BJ (cell line): ENCODE measurements at regions of chr17 and their contacts with region 1.

Region 1: DNA sequence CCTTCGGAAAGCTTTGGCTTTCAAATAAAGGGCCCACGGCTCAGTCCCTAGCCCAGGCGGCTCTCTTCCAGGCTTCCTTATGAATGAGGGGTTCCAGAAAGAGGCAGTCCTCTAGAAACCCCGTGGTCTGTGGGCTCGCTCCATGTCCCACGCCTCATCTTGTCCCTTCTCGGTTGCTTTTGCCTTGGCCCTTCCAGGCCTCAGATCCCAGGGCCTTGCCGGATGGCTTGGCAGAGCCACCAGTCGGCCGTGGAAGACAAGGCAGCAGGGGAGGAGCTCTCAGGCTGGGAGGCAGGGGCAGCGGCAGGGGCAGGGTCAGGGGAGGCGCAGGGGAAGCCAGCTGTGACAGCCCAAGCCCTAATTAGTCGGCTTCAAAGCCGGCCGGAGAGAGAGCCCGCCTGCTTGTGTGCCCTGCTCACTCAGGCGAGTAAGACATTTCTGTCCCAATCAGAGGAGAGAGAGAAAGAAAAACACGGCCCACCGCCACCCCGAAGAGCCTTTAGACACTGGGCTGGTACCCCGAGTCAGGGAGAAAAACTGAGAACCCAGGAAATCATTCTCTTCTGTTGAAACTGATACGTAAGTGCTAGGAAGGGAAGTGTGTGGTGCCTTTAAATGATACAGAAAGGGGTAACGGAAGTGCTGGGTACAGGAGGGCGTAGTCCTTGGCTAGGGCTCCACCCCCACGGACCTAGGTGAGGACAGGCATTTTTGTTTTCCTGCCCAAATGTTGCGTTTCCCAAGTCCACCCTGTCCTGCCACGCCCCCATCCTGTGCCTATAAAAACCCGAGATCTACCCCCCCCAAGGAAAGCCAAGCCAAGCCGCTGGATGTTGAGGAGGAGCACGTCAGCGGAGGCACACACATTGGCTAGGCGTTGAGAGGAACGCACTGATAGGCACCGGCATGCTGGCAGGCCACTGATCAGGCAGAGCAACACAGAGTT is 27.8 kb upstream of the MEIOC start:
- DNase-seq: no peak
- H3K4me3 ChIP-seq: no peak overlapping the region
- H3K27me3 ChIP-seq: no peaks in the 10 kb centered on the region
- CTCF ChIP-seq: no peak

Region 2: DNA sequence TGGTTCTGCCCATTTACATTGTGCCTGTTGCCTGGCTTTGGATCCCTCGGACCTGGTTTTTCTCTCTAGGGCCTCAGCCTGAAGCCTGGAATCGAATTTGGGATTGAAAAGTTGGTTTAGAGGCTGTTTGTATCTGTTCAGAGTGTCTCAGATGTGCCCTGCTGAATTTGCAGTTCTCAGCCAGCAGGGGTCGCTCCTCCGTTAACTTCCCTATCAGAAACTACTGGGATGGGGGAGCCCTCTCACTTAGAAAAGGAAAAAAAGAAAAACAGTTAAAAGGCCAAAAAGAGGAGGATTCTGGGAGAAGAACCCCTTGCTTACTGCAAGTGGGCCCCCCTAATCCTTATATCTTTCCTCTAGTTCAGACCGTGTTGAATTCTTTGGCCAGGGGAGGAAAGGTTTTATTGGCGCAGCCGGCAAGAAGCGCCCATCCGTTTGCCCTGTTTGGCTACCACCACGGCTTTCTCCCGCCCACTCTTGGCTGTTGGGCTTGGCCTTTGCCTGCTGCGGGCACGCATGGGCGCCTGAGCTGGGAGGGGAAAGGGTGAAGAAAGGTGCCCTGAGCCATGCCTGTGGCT is 62.6 kb before region 1 on chr17:
- CTCF ChIA-PET with region 1: interaction called, 4 read pairs
- POLR2A ChIA-PET with region 1: interaction called, 12 read pairs
- DNase-seq: no peak
- H3K4me3 ChIP-seq: no peak overlapping the region
- H3K27me3 ChIP-seq: no peaks in the 10 kb centered on the region
- CTCF ChIP-seq: peak; percentile 59; the same call in 1 of the 2 replicates

Region 3: DNA sequence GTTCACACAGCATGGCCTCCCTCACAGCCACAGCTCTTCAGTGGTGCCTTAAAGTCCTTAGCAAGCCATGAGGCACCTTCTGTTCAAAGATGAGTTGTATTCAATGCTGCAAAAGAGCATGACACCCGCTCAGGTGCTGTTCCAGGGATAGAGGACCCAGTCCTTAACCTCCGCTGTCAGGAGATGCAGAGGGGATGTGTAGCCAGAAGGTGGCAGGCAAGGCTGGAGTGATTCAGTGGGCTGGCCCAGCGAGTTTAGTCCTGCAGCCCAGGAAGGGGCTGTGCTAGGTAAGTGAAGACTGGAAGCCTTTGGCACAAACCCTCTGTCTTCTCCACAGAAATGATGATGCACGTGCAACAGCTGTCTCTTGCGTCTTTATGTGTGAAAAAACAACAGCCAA is 105.2 kb after region 1 on chr17:
- CTCF ChIA-PET with region 1: no interaction called
- POLR2A ChIA-PET with region 1: no interaction called
- DNase-seq: no peak
- H3K4me3 ChIP-seq: no peak overlapping the region
- H3K27me3 ChIP-seq: no peaks in the 10 kb centered on the region
- CTCF ChIP-seq: peak; percentile 42

Region 4: DNA sequence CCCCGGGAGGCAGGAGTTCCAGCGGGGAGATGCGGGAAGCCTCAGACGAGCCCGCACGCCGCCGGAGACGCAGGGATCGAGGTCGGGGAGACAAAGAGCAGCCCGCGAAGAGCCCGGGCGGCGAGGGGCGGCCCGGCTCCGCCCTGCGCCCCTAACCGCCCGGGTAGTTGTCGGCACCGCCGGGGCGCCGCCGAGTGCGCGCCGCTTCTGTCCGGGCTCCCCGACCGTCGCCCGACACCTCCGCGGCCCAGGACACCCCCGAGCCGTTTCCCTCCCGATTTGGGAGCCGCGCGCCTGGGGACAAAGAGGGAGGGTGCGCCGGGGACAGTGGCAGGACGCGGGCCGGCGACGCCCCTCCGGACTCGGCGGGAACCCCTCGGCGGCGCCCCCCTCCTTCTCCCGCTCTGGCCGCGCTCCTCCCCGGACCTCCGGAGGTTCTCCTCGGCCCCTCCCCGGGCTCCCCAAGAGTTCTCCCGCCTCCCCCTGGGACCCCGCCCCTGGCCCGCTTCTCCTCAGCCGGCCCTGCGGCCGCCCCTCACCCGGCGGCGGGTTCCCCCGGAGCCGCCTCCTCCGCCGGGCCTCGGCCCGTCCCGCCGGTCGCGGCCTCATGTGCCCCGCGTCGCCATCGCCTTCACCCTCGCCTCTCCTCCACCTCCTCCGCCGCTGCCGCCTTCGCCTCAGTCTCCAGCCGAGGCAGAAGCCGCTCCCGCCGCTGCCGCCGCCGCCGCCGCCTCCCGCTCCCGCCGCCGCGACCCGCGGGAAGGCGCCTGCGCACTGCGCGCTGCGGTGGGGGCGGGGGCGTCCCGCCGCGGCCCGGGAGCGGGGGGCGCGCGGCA is 201.2 kb after region 1 on chr17 and contains the start of gene GJC1:
- CTCF ChIA-PET with region 1: no interaction called
- POLR2A ChIA-PET with region 1: no interaction called
- DNase-seq: no peak
- H3K4me3 ChIP-seq: peak within 1 kb of the TSS; percentile 83
- H3K27me3 ChIP-seq: no peaks in the 10 kb centered on the region
- CTCF ChIP-seq: no peak
- polyA plus RNA-seq, gene GJC1: 26.5 and 32.2 TPM in 2 replicates